Caco-2 (cell line): ENCODE measurements at regions of chr19 and their contacts with region 1.

Region 1: DNA sequence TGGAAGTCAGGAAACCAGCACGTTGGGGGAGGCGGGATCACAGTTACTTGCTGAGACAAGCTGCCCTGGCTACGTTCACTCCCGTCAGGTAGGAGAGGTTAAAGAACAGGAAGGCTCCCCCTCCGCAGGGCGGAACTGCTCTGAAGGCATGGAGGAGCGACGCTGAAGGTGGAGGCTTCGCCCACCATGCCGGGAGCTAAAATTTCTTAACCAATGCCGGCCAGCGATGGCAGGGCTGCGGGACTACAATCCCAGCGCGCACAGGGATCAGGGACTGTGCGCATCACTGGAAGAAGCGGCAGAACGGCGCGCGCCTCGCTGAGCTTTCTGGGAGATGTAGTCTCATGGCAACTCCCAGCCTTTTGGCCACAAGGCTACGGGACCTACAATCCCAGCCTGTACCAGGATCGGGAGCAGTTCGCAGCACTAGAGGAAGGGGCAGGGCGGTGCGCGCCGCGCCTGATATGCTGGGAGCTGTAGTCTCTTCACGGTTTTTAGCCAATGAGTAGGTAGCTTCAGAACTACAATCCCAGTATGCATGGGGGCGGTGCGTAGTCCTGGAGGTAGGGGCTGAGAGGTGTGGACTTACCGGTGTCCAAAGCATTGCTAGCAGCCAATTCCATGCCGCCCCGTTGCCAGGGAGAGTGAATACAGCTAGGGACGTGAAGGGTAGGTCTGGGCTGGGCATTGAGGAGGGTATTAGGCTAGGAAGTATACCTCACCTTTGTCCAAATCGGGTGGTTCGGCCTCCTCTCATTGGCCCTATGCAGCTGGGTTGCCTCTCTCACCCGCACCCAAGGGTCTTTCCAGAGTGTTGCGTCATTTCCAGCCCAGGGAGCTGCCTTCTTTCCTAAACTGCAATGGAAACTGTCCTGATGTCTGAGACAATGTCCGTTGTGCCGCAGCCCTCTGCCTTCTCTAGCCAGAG is 12.8 kb upstream of the ZNF682 start:
- DNase-seq: peak; percentile 88 to 96
- H3K4me3 ChIP-seq: peak overlapping the region; percentile 47
- H3K4me3 Mint-ChIP-seq: peak overlapping the region; percentile 89
- H3K27ac Mint-ChIP-seq: peak overlapping the region; percentile 90
- H3K4me1 ChIP-seq: no peaks in the 10 kb centered on the region
- H3K4me1 Mint-ChIP-seq: no peaks in the 10 kb centered on the region
- H3K27me3 ChIP-seq: no peaks in the 10 kb centered on the region
- H3K27me3 Mint-ChIP-seq: no peaks in the 10 kb centered on the region
- CTCF ChIP-seq: no peak

Region 2: DNA sequence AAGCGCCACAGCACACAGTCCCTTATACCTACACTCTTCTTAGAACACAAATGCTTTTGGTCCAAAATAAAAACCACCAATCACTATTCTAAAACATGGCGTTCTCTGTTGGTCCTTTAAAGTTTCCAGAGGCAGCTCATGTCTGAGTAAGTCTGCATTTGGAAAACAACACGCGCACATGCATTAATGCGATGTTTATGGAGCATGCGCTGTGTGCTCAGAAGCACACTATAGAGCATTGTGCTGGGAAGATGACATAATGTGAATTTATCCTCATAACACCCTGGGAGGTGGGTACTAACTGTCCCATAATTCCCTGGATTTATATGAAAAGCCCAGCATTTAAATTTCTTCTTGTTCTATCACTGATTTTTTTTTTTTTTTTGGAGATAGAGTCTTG is 23.5 kb before region 1 on chr19:
- CTCF ChIA-PET with region 1: no interaction called
- POLR2A ChIA-PET with region 1: no interaction called
- intact Hi-C with region 1: no loop called
- DNase-seq: no peak
- H3K4me3 ChIP-seq: no peak overlapping the region
- H3K4me3 Mint-ChIP-seq: no peak overlapping the region
- H3K27ac Mint-ChIP-seq: no peak overlapping the region
- H3K4me1 ChIP-seq: no peaks in the 10 kb centered on the region
- H3K4me1 Mint-ChIP-seq: no peaks in the 10 kb centered on the region
- H3K27me3 ChIP-seq: no peaks in the 10 kb centered on the region
- H3K27me3 Mint-ChIP-seq: no peaks in the 10 kb centered on the region
- CTCF ChIP-seq: no peak

Region 3: GRCh38 chr19:20039203-20039723 is 12.8 kb before region 1 on chr19 and contains the start of gene ZNF682:
- CTCF ChIA-PET with region 1: no interaction called
- POLR2A ChIA-PET with region 1: interaction called, 12 read pairs
- intact Hi-C with region 1: loop called (anchors 1 kb)
- DNase-seq: peak; percentile 87 to 93
- H3K4me3 ChIP-seq: peak within 1 kb of the TSS; percentile 63
- H3K4me3 Mint-ChIP-seq: peak within 1 kb of the TSS; percentile 74
- H3K27ac Mint-ChIP-seq: no peak within 1 kb of the TSS
- H3K4me1 ChIP-seq: no peaks in the 10 kb centered on the region
- H3K4me1 Mint-ChIP-seq: no peaks in the 10 kb centered on the region
- H3K27me3 ChIP-seq: no peaks in the 10 kb centered on the region
- H3K27me3 Mint-ChIP-seq: no peaks in the 10 kb centered on the region
- CTCF ChIP-seq: no peak
- total RNA-seq, gene ZNF682: 1.8 and 2.5 TPM in 2 replicates

Region 4: DNA sequence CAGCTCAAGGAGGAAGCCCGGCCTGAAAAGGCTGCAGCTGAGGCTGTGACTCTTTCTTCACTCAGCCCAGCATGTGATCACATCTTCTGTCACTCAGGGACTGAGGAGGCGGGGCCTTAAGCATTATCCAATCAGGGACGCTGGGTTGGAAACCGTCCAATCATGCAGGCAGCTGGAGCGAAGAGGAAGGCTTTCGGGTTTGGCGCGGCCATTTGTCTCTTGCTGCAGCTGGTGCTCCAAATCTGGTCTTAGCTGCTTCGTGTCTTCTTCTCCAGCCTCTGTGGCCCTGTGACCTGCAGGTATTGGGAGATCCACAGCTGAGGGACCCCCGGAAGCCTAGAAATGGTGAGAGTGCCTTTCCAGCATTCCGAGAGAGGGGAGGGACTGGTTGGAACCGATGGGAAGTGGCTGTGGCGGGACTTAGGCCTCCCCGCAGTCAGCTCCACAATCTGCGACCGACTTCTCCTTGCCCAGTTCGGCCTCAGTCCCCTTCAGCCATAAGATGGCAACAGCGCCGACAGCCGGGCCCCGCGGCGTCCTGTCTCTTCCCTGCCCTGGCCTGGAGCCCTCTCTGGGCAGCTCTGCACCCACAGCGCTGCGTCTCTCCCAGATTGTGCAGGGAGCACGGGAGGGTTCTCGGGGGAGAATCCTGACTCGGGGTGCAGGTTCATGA is 25.8 kb after region 1 on chr19 and contains the start of gene ZNF90:
- CTCF ChIA-PET with region 1: no interaction called
- POLR2A ChIA-PET with region 1: interaction called, 4 read pairs
- intact Hi-C with region 1: loop called (anchors 1 kb)
- DNase-seq: peak; percentile 76 to 91
- H3K4me3 ChIP-seq: peak within 1 kb of the TSS; percentile 53
- H3K4me3 Mint-ChIP-seq: peak within 1 kb of the TSS; percentile 79
- H3K27ac Mint-ChIP-seq: peak within 1 kb of the TSS; percentile 45
- H3K4me1 ChIP-seq: no peaks in the 10 kb centered on the region
- H3K4me1 Mint-ChIP-seq: no peaks in the 10 kb centered on the region
- H3K27me3 ChIP-seq: no peaks in the 10 kb centered on the region
- H3K27me3 Mint-ChIP-seq: no peaks in the 10 kb centered on the region
- CTCF ChIP-seq: no peak
- total RNA-seq, gene ZNF90: 4.8 and 7.1 TPM in 2 replicates

Region 5: DNA sequence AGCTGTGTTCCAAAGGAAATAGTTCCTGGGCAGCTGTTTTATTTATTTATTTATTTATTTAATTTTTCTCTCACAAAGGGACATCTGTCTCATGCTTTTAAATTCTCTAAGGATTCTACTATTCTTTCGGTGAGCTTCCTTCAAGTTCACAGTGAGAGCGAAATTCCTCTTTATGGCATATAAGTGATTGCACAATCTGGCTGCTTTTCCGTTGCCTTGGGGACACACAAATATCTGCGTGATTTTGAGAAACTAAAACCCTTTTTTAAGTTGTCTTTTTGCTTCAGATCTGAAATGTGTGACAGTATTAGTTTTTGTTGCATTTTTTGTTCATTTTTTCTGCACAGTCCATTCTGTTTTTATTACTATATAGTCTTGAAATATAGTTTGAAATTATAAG is 134.1 kb after region 1 on chr19:
- CTCF ChIA-PET with region 1: no interaction called
- POLR2A ChIA-PET with region 1: no interaction called
- intact Hi-C with region 1: no loop called
- DNase-seq: no peak
- H3K4me3 ChIP-seq: no peak overlapping the region
- H3K4me3 Mint-ChIP-seq: no peak overlapping the region
- H3K27ac Mint-ChIP-seq: no peak overlapping the region
- H3K4me1 ChIP-seq: no peaks in the 10 kb centered on the region
- H3K4me1 Mint-ChIP-seq: no peaks in the 10 kb centered on the region
- H3K27me3 ChIP-seq: no peaks in the 10 kb centered on the region
- H3K27me3 Mint-ChIP-seq: no peaks in the 10 kb centered on the region
- CTCF ChIP-seq: no peak